Posterior vena cava (tissue), 2 donors: ENCODE measurements at regions of chr19 and their contacts with region 1.

Region 1: GRCh38 chr19:4362861-4363510 is 19.6 kb downstream of the MPND start:
- DNase-seq: no peak

Region 2: GRCh38 chr19:4400135-4400936 is 37.4 kb after region 1 on chr19 and contains the start of gene SH3GL1:
- intact Hi-C with region 1: loop called in 1 of 2 experiments (anchors 5 kb)
- DNase-seq: peak; percentile 97
- total RNA-seq, gene SH3GL1: 77.5 to 88.8 TPM